Activated CD4-positive, alpha-beta T cell treated with anti-CD3 and anti-CD28 coated beads, Interleukin-2, amount 10 ng/mL, durations not matched to agents 7 days and 5 days (primary cell): ENCODE measurements at regions of chr3 and their contacts with region 1.

Region 1: DNA sequence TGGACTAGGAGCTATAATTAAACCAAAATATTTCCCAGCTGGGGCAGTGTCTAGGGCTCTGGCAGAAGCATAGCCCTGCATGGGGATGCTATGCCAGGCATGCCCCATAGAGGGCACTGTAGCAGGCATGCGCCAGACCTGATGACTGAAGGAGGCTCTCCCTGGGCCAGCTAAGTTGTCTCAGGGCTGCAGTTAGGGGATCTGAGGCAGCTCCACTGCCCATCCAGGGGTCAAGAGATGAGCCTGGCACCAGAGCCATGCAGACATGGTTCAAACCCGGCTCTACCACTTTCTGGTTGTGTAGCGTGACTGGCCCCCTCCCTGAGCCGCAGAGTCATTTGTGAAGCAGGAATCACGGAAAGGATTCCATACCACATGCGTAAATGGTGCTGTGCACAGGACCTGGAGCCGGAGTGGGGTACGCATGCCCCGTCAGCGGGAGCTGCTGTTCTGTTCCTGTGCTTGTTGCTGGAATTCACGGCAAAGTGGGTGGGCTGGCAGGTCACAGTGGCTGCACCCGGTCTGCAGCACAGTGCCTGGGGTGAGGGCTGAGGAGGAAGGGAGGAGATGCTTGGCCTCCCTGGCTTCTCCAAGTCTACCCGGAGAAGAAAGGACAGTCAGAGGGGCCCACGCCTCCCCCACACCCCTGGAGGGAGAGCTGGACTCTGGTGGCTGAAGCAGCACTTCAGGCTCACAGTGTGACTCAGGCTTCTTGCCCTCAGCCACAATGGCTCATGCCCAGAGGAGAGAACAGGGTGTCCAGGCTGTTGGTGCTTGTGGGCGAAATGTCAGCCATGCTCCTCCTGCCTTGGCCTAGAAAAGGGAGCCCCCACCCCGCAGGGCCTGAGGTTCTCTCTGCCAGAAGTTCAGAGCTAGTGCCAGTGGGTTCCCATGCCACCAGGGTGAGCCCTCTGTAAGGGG is 43.1 kb downstream of the DNASE1L3 start:
- DNase-seq: peak; percentile 64
- H3K4me3 Mint-ChIP-seq: no peak overlapping the region
- H3K27ac Mint-ChIP-seq: no peak overlapping the region
- H3K4me1 Mint-ChIP-seq: no peaks in the 10 kb centered on the region
- H3K27me3 Mint-ChIP-seq: no peaks in the 10 kb centered on the region

Region 2: DNA sequence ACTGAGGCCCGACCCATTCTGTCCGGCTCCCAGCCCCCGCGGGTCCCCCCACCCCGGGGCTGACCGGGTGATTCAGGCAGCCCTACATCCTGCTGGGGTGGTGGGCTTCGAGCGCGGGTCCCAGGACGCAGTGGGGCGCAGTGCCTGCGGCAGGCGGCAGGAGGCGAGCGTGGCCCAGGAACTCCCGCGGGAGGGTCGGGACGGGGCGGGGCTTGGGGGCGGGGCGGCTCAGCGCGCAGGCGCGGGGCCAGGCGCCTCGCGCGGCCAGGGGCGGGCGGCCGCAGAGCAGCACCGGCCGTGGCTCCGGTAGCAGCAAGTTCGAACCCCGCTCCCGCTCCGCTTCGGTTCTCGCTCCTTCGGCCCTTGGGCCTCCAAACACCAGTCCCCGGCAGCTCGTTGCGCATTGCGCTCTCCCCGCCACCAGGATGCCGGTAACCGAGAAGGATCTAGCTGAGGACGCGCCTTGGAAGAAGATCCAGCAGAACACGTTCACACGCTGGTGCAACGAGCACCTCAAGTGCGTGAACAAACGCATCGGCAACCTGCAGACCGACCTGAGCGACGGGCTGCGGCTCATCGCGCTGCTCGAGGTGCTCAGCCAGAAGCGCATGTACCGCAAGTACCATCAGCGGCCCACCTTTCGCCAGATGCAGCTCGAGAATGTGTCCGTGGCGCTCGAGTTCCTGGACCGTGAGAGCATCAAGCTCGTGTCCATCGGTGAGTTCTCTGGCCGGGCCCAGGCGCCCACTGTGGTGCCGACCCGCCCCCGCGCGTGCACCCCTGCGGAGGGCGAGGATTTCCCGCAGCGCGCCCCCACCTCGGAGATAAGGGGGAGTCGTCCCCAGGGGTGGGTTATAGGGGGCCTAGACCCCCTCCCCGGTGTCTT is 159.3 kb before region 1 on chr3 and contains the start of gene FLNB:
- CTCF ChIA-PET with region 1: interaction called, 16 read pairs
- POLR2A ChIA-PET with region 1: no interaction called
- DNase-seq: peak; percentile 77
- H3K4me3 Mint-ChIP-seq: peak within 1 kb of the TSS; percentile 85
- H3K27ac Mint-ChIP-seq: peak within 1 kb of the TSS; percentile 90
- H3K4me1 Mint-ChIP-seq: peaks cover 43% of the 10 kb centered on the region
- H3K27me3 Mint-ChIP-seq: no peaks in the 10 kb centered on the region
- total RNA-seq, gene FLNB: 27.2 to 28.1 TPM

Region 3: DNA sequence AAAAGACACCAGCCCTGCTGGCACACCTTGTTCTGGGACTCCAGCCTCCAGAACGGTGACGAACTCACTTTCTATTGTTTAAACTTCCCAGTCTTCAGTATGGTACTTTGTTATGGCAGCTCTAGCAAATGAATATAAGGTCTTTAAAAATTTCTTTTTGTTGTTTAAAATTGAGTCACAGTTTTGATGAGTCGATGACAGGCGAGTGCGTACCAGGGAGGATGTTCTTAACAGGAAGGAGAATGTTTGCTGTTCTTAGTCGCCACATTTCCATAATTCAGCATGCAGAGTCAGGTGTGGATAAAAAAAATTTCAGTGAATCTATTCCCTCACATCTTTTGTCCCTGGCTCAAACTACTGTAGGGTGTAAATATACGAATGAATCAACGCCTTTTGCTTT is 30.7 kb after region 1 on chr3:
- CTCF ChIA-PET with region 1: no interaction called
- POLR2A ChIA-PET with region 1: no interaction called
- DNase-seq: no peak
- H3K4me3 Mint-ChIP-seq: no peak overlapping the region
- H3K27ac Mint-ChIP-seq: no peak overlapping the region
- H3K4me1 Mint-ChIP-seq: peaks cover 2% of the 10 kb centered on the region
- H3K27me3 Mint-ChIP-seq: peaks cover 12% of the 10 kb centered on the region

Region 4: GRCh38 chr3:58783845-58784244 is 616.2 kb after region 1 on chr3:
- CTCF ChIA-PET with region 1: no interaction called
- POLR2A ChIA-PET with region 1: no interaction called
- DNase-seq: no peak
- H3K4me3 Mint-ChIP-seq: no peak overlapping the region
- H3K27ac Mint-ChIP-seq: no peak overlapping the region
- H3K4me1 Mint-ChIP-seq: no peaks in the 10 kb centered on the region
- H3K27me3 Mint-ChIP-seq: peaks cover 4% of the 10 kb centered on the region